ENCODE measurements at regions of chr12 and their contacts with region 1.

Region 1: DNA sequence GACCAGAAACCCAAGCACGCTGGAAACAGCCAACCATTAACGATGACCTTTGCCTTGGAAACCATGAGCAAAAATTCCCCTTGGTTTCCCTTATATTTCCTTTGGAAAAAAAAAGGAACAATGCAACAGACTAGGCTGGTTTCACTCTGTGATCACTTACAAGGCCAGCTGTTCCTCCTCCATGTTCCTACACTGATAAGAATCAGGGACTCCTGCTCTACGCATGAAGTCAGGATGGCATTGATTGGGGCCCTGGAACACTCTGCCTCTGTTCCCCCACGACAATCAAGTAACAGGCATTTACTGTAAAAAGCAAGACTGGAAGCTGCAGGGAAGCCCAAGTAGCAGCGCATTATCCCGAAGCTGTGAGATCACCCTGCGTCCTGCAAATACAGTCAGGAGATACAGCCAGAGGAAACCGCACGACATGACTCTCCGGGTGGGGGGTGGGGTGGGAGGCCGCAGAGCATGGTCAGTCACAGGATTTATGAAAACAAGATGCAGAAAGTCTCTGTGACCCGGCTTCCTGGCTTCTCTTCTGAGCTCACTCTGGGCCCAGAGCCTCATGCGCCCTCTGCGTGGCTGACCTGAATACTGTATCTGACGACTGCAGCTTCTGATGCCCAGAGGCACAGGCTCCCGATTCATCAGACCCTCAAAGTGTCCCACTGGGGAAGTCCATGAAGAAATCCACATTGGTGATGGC is 31.1 kb downstream of the SSH1 start:
- DNase-seq: no peak
- H3K4me3 Mint-ChIP-seq: peak overlapping the region; percentile 48
- H3K27ac Mint-ChIP-seq: peak overlapping the region; percentile 53
- H3K4me1 Mint-ChIP-seq: peaks cover 60% of the 10 kb centered on the region
- H3K27me3 Mint-ChIP-seq: no peaks in the 10 kb centered on the region

Region 2: DNA sequence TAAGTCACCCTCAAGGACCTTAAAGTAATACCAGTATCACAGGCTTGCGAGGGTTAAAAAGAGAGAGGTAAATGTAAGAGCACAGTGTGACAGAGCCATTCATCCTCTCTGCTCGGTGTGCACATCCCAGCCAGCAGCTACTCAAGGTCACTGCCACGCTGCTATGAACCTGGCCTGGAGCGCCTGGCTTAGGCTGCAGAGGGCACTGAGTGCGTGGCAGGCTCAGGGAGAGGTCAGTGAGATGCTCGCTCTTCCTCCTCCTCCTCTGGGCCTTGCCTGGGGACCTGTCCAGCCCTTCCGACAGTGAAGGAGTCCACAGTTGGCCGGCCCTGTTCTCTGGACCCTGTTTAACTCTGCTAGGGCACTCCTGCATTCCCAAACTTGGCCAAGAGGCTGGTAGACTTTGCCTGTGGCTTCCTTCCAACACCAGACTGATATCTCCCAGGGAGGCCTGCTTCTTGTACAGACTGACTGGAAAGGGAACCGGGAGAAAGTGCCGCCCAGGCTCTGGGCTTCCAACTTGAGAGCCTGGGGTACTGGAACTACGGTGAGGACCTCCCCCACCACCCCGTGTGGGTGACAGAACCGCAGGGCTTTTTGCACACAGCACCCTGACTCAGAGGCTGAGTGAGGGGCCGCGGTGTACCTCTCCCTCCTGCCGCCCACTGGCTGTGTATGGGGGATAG is 32.4 kb before region 1 on chr12:
- intact Hi-C with region 1: no loop called
- DNase-seq: no peak
- H3K4me3 Mint-ChIP-seq: no peak overlapping the region
- H3K27ac Mint-ChIP-seq: no peak overlapping the region
- H3K4me1 Mint-ChIP-seq: peaks cover 5% of the 10 kb centered on the region
- H3K27me3 Mint-ChIP-seq: no peaks in the 10 kb centered on the region

Region 3: GRCh38 chr12:108846290-108846701 is 20.0 kb after region 1 on chr12:
- intact Hi-C with region 1: no loop called
- DNase-seq: no peak
- H3K4me3 Mint-ChIP-seq: no peak overlapping the region
- H3K27ac Mint-ChIP-seq: no peak overlapping the region
- H3K4me1 Mint-ChIP-seq: peaks cover 8% of the 10 kb centered on the region
- H3K27me3 Mint-ChIP-seq: no peaks in the 10 kb centered on the region

Region 4: DNA sequence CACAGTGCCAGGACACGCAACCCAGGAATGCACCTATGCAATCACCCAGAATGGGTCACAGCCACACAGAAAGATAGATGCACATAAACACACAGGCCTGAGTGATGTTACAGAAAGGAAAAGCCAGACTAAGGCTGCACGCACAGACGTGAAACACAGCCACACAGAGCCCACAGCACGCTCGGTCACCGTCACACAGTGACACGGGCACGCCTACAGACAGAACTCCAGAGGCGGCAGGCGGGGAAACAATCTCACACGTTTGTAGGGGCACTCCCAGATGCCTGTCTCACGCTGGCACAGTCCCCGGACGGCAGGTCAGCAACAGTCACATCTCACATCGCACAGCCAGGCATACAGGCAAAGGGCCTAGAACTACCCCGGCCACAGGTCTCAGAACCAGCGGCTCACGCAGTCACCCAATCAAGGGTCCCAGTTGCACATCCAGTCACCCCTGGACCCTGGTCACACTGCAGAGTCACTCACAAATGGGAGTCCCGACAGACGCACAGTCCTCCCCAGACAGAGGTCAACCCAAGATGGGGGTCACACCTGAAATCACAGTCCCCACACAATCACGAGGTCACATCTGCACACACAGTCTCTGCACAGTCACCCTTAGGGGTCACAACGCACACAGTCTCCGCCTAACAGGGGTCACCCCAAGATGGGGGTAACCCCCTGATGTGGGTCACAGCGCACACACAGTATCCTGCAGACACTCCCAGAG is 30.3 kb after region 1 on chr12:
- intact Hi-C with region 1: loop called (anchors 1 kb)
- DNase-seq: peak; percentile 45
- H3K4me3 Mint-ChIP-seq: peak overlapping the region; percentile 96
- H3K27ac Mint-ChIP-seq: peak overlapping the region; percentile 96
- H3K4me1 Mint-ChIP-seq: peaks cover 52% of the 10 kb centered on the region
- H3K27me3 Mint-ChIP-seq: peaks cover 10% of the 10 kb centered on the region

Region 5: DNA sequence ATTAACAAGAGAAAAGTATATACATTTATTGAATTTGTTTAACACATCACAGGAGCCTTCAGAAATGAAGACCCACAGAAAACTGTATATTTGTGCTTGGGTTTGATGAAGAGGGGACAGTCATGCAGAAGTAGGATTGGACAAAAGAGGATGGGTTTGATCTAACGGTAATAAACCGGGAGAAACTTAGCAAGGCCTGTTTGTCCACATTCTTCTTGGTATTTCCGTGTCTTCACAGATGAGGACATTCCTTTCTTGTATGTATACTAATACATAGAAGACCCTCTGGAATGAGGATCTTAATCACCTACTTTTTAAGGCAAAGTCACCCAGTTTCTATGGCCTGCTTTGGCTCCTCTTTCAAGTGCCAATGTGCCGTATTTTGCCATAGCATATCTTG is 536.2 kb after region 1 on chr12:
- intact Hi-C with region 1: no loop called
- DNase-seq: no peak
- H3K4me3 Mint-ChIP-seq: no peak overlapping the region
- H3K27ac Mint-ChIP-seq: no peak overlapping the region
- H3K4me1 Mint-ChIP-seq: peaks cover 14% of the 10 kb centered on the region
- H3K27me3 Mint-ChIP-seq: peaks cover 18% of the 10 kb centered on the region